ENCODE measurements at regions of chr14 and their contacts with region 1.

Region 1: GRCh38 chr14:24710403-24711112 is 76.6 kb upstream of the GZMB start:
- DNase-seq: peak; percentile 66
- ATAC-seq: peak; percentile 46
- H3K4me3 ChIP-seq: peak overlapping the region; percentile 50; the same call in 1 of the 2 replicates
- H3K27ac ChIP-seq: no peak overlapping the region
- H3K4me1 ChIP-seq: no peaks in the 10 kb centered on the region
- H3K27me3 ChIP-seq: peaks cover 12% of the 10 kb centered on the region
- CTCF ChIP-seq: peak; percentile 83

Region 2: GRCh38 chr14:24662753-24663152 is 47.8 kb before region 1 on chr14:
- CTCF ChIA-PET with region 1: no interaction called
- POLR2A ChIA-PET with region 1: no interaction called
- intact Hi-C with region 1: no loop called
- DNase-seq: no peak
- ATAC-seq: no peak
- H3K4me3 ChIP-seq: no peak overlapping the region
- H3K27ac ChIP-seq: no peak overlapping the region
- H3K4me1 ChIP-seq: no peaks in the 10 kb centered on the region
- H3K27me3 ChIP-seq: peaks cover 11% of the 10 kb centered on the region
- CTCF ChIP-seq: no peak

Region 3: DNA sequence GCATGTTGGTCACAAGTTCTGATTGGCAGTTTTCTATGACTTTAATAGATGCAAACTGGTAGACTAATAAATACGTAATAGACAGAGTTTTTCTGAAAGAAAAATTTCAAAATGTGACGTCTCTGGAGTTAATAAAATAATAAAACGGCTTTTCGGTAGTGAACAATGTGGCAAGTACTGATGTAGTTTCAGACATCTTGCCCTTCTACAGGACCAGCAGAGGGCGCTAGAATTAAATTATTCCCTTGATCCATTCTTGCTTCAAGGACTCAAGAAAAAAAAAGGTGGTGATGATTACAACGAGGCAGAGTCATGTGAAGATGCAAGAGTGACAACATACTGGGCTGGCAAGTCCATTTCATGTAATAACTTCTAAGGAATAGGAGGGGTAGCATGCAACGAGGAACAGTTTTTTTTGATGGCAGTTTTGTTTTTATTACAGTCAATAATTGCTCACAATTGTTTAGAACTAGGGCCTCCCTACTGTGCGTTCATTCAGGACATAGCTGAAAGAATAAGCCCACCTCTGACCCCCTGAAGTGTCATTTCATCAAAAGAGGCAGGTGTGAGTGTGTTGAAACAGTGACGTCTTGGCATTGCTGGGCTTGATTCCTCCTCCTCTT is 24.4 kb after region 1 on chr14:
- CTCF ChIA-PET with region 1: no interaction called
- POLR2A ChIA-PET with region 1: no interaction called
- intact Hi-C with region 1: no loop called
- DNase-seq: peak; percentile 58
- ATAC-seq: no peak
- H3K4me3 ChIP-seq: no peak overlapping the region
- H3K27ac ChIP-seq: no peak overlapping the region
- H3K4me1 ChIP-seq: no peaks in the 10 kb centered on the region
- H3K27me3 ChIP-seq: no peaks in the 10 kb centered on the region
- CTCF ChIP-seq: peak; percentile 83

Region 4: DNA sequence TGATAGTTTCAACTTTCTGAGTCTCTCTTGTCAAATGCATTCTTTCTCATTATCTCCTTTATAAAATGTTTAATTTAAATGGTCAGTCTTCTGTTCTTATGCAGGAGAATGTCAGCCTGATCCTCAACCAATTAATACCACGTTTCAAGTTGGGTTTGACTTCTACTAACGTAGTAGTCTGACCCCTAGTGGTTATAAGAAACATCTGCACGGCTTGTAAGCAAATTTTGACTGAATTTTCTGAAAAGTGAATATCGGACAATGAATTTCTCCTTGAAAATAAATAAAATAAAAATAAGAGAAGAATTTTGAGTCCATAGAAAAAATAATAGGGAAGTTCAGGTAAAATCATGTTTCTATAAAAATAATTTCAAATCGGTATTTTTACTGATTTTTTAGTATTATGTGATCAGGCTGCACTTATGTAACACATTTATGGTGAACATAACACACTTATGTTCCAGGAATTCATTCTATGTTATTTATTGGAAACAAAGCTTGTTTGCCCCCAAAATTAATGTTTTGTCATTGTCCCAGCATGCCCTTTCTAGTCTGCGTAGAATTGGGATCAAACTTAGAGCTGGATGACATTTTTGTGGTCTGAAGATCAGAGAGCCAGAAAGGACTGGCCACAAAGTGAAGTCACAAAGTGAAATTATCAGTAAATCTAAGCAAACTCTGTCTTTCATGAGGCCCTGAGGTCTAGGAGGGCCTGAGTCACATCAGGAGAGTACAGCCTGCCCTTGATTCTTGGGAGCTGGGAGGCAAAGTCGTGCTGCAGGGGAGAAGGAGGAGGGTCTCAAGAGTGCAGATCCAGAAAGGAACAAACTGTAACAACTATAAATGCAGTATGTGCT is 440.6 kb after region 1 on chr14:
- CTCF ChIA-PET with region 1: no interaction called
- POLR2A ChIA-PET with region 1: no interaction called
- intact Hi-C with region 1: loop called (anchors 2 kb)
- DNase-seq: peak; percentile 52
- ATAC-seq: no peak
- H3K4me3 ChIP-seq: no peak overlapping the region
- H3K27ac ChIP-seq: no peak overlapping the region
- H3K4me1 ChIP-seq: no peaks in the 10 kb centered on the region
- H3K27me3 ChIP-seq: no peaks in the 10 kb centered on the region
- CTCF ChIP-seq: peak; percentile 74

Region 5: DNA sequence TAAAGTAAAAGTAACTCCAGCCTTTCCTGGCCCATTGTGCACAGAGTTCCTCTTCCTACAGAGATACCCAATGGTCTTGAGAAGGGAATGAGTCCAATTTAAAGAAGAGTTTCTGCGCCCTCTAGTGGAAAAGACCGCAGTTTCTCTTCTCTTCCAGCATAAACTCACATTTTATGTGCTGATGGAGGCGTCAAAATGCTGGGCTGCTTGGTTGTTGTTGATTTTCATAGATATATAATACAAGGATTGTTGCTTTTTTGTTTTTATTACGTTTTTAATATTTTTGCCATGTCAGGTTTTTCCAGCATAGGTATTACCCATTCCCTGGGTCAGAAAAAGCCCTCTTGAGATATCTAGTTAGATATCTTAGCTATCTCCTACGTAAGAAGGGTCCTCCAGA is 696.3 kb after region 1 on chr14:
- CTCF ChIA-PET with region 1: interaction called, 11 read pairs
- POLR2A ChIA-PET with region 1: no interaction called
- intact Hi-C with region 1: no loop called
- DNase-seq: peak; percentile 57
- ATAC-seq: no peak
- H3K4me3 ChIP-seq: no peak overlapping the region
- H3K27ac ChIP-seq: no peak overlapping the region
- H3K4me1 ChIP-seq: no peaks in the 10 kb centered on the region
- H3K27me3 ChIP-seq: no peaks in the 10 kb centered on the region
- CTCF ChIP-seq: peak; percentile 66